ENCODE measurements at regions of chr14 and their contacts with region 1.

Region 1: GRCh38 chr14:73472185-73473114 is 14.1 kb upstream of the NUMB start:
- DNase-seq: peak; percentile 67
- H3K4me3 Mint-ChIP-seq: no peak overlapping the region
- H3K27ac Mint-ChIP-seq: no peak overlapping the region
- H3K4me1 Mint-ChIP-seq: peaks cover 5% of the 10 kb centered on the region
- H3K27me3 Mint-ChIP-seq: no peaks in the 10 kb centered on the region
- CTCF ChIP-seq: peak; percentile 68

Region 2: DNA sequence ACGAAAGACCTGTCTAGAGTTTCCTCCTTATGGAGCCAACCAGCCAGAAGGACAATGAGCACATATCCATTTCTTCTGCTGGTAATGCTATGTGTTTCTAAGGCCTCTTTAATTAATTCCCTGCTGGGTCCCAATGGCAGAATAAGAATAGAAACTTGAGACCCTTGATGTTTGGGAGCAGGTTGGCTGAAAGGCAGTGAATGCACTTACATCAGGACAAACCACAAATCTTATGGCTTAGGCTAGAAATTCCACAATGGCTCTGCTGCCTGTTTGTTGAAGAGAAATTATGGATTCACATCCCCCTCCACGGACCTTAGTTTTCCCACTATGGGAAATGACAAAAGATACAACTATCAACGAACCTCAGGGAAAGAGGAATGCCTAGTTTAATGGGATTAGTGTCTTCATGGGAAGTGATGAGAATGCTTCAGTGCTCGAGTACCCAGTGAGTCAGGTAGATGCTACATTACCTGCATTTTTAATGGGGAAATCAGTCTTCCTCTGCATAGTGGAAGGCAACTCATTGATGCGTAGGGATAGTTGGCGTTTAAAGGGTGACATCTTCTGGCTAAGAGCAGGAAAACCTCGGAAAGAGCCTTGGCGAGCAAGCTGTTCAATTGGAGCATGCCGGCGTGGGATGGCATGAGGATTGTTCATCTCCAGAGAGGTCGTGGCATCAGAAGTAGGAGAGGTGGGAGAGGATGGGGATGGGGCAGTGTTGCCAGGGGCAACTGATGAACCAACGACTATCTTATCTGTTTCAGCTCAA is 188.7 kb before region 1 on chr14:
- CTCF ChIA-PET with region 1: interaction called, 11 read pairs
- POLR2A ChIA-PET with region 1: no interaction called
- intact Hi-C with region 1: no loop called
- DNase-seq: no peak
- H3K4me3 Mint-ChIP-seq: no peak overlapping the region
- H3K27ac Mint-ChIP-seq: no peak overlapping the region
- H3K4me1 Mint-ChIP-seq: no peaks in the 10 kb centered on the region
- H3K27me3 Mint-ChIP-seq: no peaks in the 10 kb centered on the region
- CTCF ChIP-seq: no peak

Measured in MCF 10A (cell line).